ENCODE measurements at regions of chr4 and their contacts with region 1.

Region 1: DNA sequence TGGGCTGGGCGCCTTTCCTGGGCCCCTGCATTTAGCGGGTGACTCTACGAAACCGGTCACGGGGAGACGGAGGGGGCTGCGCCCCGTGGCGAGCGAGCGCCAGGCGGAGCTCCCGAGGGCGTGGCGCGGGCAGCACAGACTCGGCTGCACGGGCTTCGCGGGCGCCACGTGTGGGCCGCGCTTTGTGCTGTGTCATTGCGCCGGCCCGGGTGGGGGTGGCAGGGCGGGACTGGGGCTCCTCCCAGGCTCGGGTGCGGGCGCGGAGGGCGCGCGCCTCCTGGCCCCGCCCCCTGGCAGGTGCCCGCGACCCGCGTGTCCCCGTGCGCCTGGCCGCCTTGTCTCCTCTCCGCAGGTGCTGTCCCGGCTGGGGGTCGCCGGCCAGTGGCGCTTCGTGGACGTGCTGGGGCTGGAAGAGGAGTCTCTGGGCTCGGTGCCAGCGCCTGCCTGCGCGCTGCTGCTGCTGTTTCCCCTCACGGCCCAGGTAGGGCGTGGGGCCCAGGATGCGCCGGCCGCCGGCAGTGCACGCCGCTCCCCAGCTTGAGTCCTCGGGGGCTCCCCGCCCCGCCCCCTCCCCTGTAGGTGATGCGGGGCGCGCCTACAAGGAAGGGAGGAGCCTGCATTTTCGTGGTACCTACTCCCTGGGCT is 651 bp downstream of the UCHL1 start:
- DNase-seq: peak; percentile 31
- H3K4me3 Mint-ChIP-seq: peak overlapping the region; percentile 40
- H3K27ac Mint-ChIP-seq: no peak overlapping the region
- H3K4me1 Mint-ChIP-seq: peaks cover 5% of the 10 kb centered on the region
- H3K27me3 Mint-ChIP-seq: peaks cover 50% of the 10 kb centered on the region

Region 2: DNA sequence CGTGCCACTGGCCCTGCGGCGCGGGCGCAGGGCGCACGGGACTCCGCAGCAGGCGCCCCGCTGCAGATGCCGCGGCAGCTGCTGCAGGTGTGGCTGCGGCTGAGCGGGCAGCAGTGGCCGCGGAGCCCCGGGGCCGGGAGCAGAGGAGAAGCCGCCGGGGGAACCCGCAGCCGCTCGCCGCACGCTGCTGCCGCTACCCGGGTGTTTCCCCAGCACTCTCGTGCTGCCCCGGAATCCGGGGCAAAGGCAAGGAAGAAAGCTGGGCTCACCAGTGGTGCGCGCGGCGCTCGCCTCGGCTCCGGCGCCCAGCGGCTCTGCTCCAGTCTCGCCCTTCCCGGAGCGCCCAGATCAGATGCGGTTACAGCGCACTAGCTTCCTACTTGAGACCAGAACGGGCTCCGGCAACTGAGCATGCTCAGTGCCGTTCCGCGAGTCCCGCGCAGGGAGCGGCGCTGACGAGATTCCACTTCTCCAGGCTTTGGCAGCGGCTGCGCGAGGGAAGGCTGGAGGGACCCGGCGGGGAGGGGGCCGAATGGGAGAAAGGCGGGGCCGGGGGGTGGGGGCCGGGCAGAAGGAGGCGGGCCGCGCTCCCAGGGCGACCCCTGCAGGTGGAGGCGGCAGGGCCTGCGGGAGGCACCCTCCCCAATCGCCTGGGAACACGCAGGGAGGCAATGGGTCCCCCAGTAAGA is 43.1 kb before region 1 on chr4 and contains the start of gene APBB2:
- CTCF ChIA-PET with region 1: no interaction called
- DNase-seq: peak; percentile 53
- H3K4me3 Mint-ChIP-seq: peak within 1 kb of the TSS; percentile 77
- H3K27ac Mint-ChIP-seq: no peak within 1 kb of the TSS
- H3K4me1 Mint-ChIP-seq: peaks cover 35% of the 10 kb centered on the region
- H3K27me3 Mint-ChIP-seq: peaks cover 55% of the 10 kb centered on the region

Region 3: GRCh38 chr4:41281038-41281634 is 23.8 kb after region 1 on chr4:
- CTCF ChIA-PET with region 1: interaction called, 11 read pairs
- DNase-seq: peak; percentile 29
- H3K4me3 Mint-ChIP-seq: no peak overlapping the region
- H3K27ac Mint-ChIP-seq: no peak overlapping the region
- H3K4me1 Mint-ChIP-seq: no peaks in the 10 kb centered on the region
- H3K27me3 Mint-ChIP-seq: peaks cover 4% of the 10 kb centered on the region